ENCODE measurements at regions of chr2 and their contacts with region 1.

Region 1: GRCh38 chr2:222973237-222973636 is 78.8 kb upstream of the KCNE4 start:
- DNase-seq: no peak
- H3K4me3 ChIP-seq: no peak overlapping the region
- H3K27ac ChIP-seq: no peak overlapping the region
- H3K4me1 ChIP-seq: no peaks in the 10 kb centered on the region
- H3K27me3 ChIP-seq: peaks cover 0 to 3% (median 0%) of the 10 kb centered on the region in 5 experiments

Region 2: DNA sequence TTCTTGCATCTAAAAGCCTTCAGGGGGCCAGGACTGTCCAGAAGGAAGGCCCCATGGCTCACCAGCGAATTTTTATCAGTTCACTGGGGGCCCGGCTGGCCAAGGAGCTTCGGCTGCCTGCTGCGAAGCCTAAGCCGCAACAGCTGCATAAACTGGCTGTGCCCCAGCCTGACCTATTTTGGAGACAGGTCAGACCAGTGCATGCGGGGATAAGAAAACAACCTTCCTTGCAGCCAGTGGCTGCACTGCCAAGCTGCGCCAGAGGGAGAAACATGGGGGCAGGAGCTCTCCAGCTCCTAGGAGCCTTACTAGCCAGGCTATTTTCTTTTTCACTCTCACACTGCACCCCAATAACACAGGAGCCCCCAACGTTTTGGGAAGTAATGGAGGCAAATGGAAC is 689.6 kb before region 1 on chr2:
- CTCF ChIA-PET with region 1: no interaction called
- POLR2A ChIA-PET with region 1: no interaction called
- DNase-seq: no peak
- H3K4me3 ChIP-seq: no peak overlapping the region
- H3K27ac ChIP-seq: no peak overlapping the region
- H3K4me1 ChIP-seq: no peaks in the 10 kb centered on the region
- H3K27me3 ChIP-seq: peaks cover 22 to 77% (median 39%) of the 10 kb centered on the region in 5 experiments

Region 3: GRCh38 chr2:223101340-223102039 is 128.3 kb after region 1 on chr2:
- CTCF ChIA-PET with region 1: interaction called, 38 read pairs
- POLR2A ChIA-PET with region 1: no interaction called
- DNase-seq: peak; percentile 7 to 16 (median 12)
- H3K4me3 ChIP-seq: no peak overlapping the region
- H3K27ac ChIP-seq: no peak overlapping the region
- H3K4me1 ChIP-seq: no peaks in the 10 kb centered on the region
- H3K27me3 ChIP-seq: peaks cover 0 to 2% (median 0%) of the 10 kb centered on the region in 5 experiments

Region 4: DNA sequence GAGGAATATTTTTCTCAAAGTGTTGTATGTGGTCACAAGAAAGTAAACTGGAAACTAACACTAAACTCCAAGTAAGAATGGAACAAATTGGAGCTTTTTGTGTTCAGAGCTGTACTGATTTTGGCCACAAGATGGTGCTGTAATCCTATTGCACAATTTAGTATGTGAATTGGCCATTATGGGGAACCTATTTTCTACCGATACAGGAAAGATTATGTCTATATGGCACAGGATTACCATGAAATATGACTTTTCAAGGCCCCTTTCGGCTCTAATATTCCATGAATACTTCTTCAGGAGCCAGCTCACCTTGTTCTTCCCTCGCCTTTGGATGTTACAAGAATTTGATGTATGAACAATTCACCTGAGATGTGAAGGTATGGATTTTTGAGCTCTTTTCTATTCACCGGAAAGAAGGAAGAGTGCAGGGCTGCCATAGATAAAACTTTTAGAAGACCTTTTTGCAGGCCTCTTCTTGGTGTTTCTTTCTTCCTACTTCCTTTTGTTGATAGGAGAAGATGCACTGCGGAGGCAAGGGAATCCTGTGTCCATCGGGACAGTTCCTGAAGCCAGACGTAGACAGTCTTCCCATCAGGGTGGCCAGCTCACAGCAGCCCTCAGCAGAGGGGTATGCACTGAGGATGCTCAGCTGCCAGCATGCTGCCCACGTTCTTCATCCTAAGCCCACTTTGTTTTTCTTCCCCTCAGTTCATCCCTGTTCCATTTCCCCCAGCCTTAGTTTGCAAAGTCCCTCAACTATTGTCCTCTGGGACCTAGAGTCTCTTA is 997.3 kb after region 1 on chr2:
- CTCF ChIA-PET with region 1: no interaction called
- POLR2A ChIA-PET with region 1: no interaction called
- DNase-seq: peak; percentile 64 to 84 (median 74)
- H3K4me3 ChIP-seq: no peak overlapping the region
- H3K27ac ChIP-seq: no peak overlapping the region
- H3K4me1 ChIP-seq: no peaks in the 10 kb centered on the region
- H3K27me3 ChIP-seq: no peaks in the 10 kb centered on the region